Panc1 (cell line): ENCODE measurements at regions of chr11 and their contacts with region 1.

Region 1: GRCh38 chr11:8586805-8587204 is 7.2 kb downstream of the STK33 start:
- DNase-seq: no peak
- ATAC-seq: no peak
- H3K4me3 ChIP-seq: no peak overlapping the region
- H3K27ac ChIP-seq: no peak overlapping the region
- H3K4me1 ChIP-seq: no peaks in the 10 kb centered on the region
- H3K27me3 ChIP-seq: peaks cover 10% of the 10 kb centered on the region; the same call in 1 of the 2 replicates
- CTCF ChIP-seq: no peak

Region 2: GRCh38 chr11:8138526-8138925 is 448.3 kb before region 1 on chr11:
- CTCF ChIA-PET with region 1: no interaction called
- POLR2A ChIA-PET with region 1: interaction called, 13 read pairs
- in situ Hi-C with region 1: no loop called
- intact Hi-C with region 1: no loop called
- DNase-seq: no peak
- ATAC-seq: no peak
- H3K4me3 ChIP-seq: no peak overlapping the region
- H3K27ac ChIP-seq: no peak overlapping the region
- H3K4me1 ChIP-seq: no peaks in the 10 kb centered on the region
- H3K27me3 ChIP-seq: no peaks in the 10 kb centered on the region
- CTCF ChIP-seq: no peak

Region 3: DNA sequence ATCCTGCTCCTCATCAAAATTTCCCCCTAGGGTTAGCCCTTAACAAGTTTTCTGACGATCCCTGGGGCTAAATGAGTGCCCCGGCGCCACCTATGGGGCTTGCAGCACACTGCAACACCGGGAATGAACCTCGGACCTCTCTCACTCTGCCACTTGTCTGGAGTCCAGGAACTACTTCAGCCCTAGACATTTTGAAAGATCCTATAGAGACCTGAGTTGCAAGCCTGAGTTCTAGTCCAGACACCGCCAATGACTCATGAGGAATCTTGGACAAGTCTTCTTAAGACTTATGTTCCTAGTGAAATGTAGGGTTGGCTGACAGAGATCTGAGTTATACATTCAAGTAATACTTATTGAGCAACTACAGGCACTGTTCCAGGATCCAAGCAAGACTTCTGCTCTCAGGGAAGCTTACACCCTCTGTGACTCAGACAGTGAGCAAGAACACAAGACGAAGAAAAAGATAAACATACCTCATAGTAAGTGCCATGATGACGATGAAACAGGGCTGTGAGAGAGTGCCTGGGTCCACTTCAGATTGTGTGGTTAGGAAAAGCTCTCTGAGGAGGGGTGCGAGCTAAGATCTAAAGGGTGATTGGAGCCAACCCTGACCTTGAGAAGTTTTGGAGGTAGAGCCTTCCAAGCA is 17.4 kb after region 1 on chr11:
- CTCF ChIA-PET with region 1: interaction called, 10 read pairs
- POLR2A ChIA-PET with region 1: no interaction called
- in situ Hi-C with region 1: no loop called
- intact Hi-C with region 1: no loop called
- DNase-seq: peak; percentile 99
- ATAC-seq: peak; percentile 81
- H3K4me3 ChIP-seq: no peak overlapping the region
- H3K27ac ChIP-seq: no peak overlapping the region
- H3K4me1 ChIP-seq: no peaks in the 10 kb centered on the region
- H3K27me3 ChIP-seq: peaks cover 2% of the 10 kb centered on the region; the same call in 1 of the 2 replicates
- CTCF ChIP-seq: peak; percentile 97